ENCODE measurements at regions of chr20 and their contacts with region 1.

Region 1: GRCh38 chr20:50790651-50791277 is 4.1 kb upstream of the BCAS4 start:
- DNase-seq: peak; percentile 85
- H3K4me3 Mint-ChIP-seq: no peak overlapping the region
- H3K27ac Mint-ChIP-seq: peak overlapping the region; percentile 69
- H3K4me1 Mint-ChIP-seq: peaks cover 6% of the 10 kb centered on the region
- H3K27me3 Mint-ChIP-seq: no peaks in the 10 kb centered on the region
- CTCF ChIP-seq: peak; percentile 70

Region 2: GRCh38 chr20:50460460-50461267 is 330.1 kb before region 1 on chr20:
- CTCF ChIA-PET with region 1: interaction called, 21 read pairs
- POLR2A ChIA-PET with region 1: no interaction called
- intact Hi-C with region 1: no loop called
- DNase-seq: peak; percentile 91
- H3K4me3 Mint-ChIP-seq: peak overlapping the region; percentile 32
- H3K27ac Mint-ChIP-seq: peak overlapping the region; percentile 84
- H3K4me1 Mint-ChIP-seq: peaks cover 23% of the 10 kb centered on the region
- H3K27me3 Mint-ChIP-seq: no peaks in the 10 kb centered on the region
- CTCF ChIP-seq: peak; percentile 94

Region 3: DNA sequence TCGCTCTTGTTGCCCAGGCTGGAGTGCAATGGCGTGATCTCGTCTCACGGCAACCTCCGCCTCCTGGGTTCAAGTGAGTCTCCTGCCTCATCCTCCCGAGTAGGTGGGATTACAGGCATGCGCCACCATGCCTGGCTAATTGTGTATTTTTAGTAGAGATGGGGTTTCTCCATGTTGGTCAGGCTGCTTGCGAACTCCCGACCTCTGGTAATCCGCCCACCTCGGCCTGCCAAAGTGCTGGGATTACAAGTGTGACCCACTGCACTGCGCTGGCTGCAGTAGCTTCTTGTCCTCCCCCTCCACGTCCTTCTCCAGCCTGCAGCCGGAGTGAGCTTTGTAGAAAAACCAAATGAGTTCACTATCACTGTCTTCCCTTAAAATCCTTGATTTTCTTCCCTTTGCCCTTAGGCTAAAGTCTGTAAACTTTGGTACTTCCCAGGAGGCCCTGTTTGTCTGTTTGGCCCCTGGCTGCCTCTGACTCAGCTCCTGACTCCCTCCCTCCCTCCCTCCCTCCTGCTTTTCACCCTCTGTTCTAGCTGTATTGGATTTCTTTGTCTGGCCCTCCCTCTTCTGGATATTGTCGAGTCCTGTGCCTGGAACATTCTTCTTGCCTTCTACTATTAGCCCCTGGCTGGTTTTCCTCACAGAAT is 46.5 kb before region 1 on chr20:
- CTCF ChIA-PET with region 1: interaction called, 126 read pairs
- POLR2A ChIA-PET with region 1: interaction called, 4 read pairs
- intact Hi-C with region 1: loop called (anchors 2 kb)
- DNase-seq: peak; percentile 88
- H3K4me3 Mint-ChIP-seq: peak overlapping the region; percentile 35
- H3K27ac Mint-ChIP-seq: peak overlapping the region; percentile 51
- H3K4me1 Mint-ChIP-seq: peaks cover 26% of the 10 kb centered on the region
- H3K27me3 Mint-ChIP-seq: no peaks in the 10 kb centered on the region
- CTCF ChIP-seq: peak; percentile 34

Region 4: GRCh38 chr20:50815162-50815989 is 24.6 kb after region 1 on chr20:
- CTCF ChIA-PET with region 1: interaction called, 13 read pairs
- POLR2A ChIA-PET with region 1: interaction called, 4 read pairs
- intact Hi-C with region 1: loop called (anchors 2 kb)
- DNase-seq: no peak
- H3K4me3 Mint-ChIP-seq: no peak overlapping the region
- H3K27ac Mint-ChIP-seq: peak overlapping the region; percentile 52
- H3K4me1 Mint-ChIP-seq: peaks cover 16% of the 10 kb centered on the region
- H3K27me3 Mint-ChIP-seq: no peaks in the 10 kb centered on the region
- CTCF ChIP-seq: no peak

Region 5: GRCh38 chr20:50919567-50919966 is 128.8 kb after region 1 on chr20:
- CTCF ChIA-PET with region 1: interaction called, 256 read pairs
- POLR2A ChIA-PET with region 1: interaction called, 25 read pairs
- intact Hi-C with region 1: no loop called
- DNase-seq: peak; percentile 96
- H3K4me3 Mint-ChIP-seq: peak overlapping the region; percentile 55
- H3K27ac Mint-ChIP-seq: peak overlapping the region; percentile 94
- H3K4me1 Mint-ChIP-seq: peaks cover 37% of the 10 kb centered on the region
- H3K27me3 Mint-ChIP-seq: no peaks in the 10 kb centered on the region
- CTCF ChIP-seq: no peak

Region 6: DNA sequence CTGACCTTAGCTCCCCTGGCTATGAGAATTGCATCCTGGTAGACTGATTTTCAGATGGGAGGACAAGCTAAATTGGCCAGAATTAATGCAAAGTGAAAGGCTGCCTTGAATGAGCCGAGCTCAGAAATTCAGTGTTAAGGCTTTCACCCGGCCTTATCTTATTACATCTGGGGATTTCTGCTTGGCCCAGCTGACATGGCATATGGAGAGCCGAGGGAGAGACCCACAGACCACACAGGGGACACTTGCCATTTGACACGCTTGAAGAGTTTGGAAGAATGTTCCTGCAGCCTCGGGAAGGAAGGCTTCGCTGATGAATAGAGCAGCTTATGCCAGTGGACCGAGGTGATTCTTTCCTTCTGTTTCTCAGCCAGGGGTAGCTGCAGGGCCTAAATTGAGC is 176.8 kb after region 1 on chr20:
- CTCF ChIA-PET with region 1: interaction called, 10 read pairs
- POLR2A ChIA-PET with region 1: no interaction called
- intact Hi-C with region 1: no loop called
- DNase-seq: no peak
- H3K4me3 Mint-ChIP-seq: no peak overlapping the region
- H3K27ac Mint-ChIP-seq: no peak overlapping the region
- H3K4me1 Mint-ChIP-seq: no peaks in the 10 kb centered on the region
- H3K27me3 Mint-ChIP-seq: peaks cover 11% of the 10 kb centered on the region
- CTCF ChIP-seq: no peak

Region 7: DNA sequence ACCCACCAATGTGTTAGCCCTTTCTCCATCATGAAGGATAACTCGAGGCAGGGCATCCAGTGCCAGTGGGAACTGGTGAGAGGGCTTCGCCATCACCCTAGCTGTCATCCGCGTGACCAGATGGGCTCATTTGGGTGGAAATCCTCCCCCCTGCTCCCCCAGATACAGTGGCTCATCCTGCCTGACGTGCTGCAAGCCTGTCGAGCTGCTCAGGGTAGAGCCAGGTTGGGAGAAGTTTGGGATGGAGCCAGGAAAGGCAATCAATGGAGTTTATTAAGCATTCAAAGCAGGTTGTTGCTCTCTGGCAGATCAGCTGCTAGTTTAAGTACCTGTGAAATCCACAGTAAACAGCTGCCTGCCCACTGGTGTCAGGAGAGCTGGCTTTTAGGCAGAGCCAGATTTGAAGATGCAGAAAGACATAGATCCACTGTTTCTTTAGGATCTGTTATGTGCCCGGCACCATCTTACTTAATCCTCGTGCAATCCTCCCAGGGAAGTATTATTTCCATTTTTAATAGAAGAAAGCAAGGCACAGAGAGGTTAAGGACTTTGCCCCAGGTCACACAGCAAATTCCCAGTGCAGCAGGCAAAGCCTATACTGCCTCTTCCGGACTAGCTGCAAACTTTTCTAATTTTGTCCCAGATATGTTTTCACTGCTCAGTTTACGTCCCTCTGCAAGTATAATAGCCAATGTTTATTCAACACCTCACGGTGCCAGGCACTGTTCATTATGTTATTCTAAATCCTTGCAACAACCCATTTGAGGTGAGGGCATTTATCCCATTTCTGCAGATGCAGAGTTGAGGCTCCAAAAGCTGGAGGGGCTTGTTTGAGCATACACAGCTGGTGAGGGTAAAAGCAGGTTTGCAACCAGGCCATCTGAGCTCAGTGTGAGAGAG is 286.3 kb after region 1 on chr20:
- CTCF ChIA-PET with region 1: no interaction called
- POLR2A ChIA-PET with region 1: no interaction called
- intact Hi-C with region 1: no loop called
- DNase-seq: no peak
- H3K4me3 Mint-ChIP-seq: no peak overlapping the region
- H3K27ac Mint-ChIP-seq: no peak overlapping the region
- H3K4me1 Mint-ChIP-seq: no peaks in the 10 kb centered on the region
- H3K27me3 Mint-ChIP-seq: peaks cover 65% of the 10 kb centered on the region
- CTCF ChIP-seq: no peak

Region 8: DNA sequence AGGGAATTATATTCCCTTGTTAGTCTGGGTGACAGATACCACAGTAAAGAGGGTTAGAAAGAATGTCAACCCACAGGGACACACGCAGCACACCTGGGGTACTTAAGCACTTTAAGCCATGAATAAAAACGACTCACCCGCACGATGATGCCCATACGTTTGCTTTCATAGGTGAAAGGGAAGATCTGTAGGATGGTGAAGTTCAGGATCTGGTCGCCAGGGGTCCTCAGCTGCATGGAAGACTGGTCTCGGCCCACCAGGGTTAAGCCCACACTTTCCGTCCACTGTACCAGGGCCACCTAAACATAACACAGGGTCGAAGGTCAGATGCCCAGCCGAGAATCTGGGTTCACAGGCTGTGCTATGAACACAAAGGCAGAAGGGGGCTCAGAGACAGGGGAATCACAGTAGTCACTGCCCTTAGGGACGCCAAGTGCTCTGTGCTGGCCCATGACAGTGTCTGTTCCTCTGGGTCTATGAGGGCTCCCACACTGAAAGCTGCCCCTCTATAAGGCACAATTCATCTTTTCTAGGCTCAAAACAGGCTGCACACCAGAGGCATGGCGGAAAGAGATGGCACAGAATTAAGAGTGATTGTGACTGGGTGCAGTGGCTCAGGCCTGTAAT is 848.6 kb after region 1 on chr20:
- CTCF ChIA-PET with region 1: no interaction called
- POLR2A ChIA-PET with region 1: no interaction called
- intact Hi-C with region 1: loop called (anchors 10 kb)
- DNase-seq: peak; percentile 76
- H3K4me3 Mint-ChIP-seq: no peak overlapping the region
- H3K27ac Mint-ChIP-seq: peak overlapping the region; percentile 53
- H3K4me1 Mint-ChIP-seq: no peaks in the 10 kb centered on the region
- H3K27me3 Mint-ChIP-seq: no peaks in the 10 kb centered on the region
- CTCF ChIP-seq: peak; percentile 91